GM10248 (cell line): ENCODE measurements at regions of chr14 and their contacts with region 1.

Region 1: DNA sequence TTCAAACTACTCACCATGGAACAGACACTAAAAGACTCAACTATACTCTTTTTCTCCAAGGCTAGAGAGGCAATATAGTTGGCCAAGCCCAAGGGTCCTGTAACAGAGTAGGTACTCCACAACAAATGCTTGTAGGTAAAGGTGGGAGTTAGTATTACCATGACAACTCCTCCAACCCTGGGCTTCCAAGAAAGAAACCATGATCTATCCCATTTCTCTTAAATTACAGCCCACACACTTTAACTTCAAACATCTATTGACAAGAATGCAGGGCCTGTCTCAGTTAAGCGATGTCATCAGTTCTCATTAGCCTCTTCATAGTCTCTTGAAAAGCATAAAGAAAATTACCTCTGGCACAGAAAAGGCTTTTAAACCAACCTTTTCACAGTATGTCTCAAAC is 25.0 kb downstream of the ERH start:
- DNase-seq: no peak
- CTCF ChIP-seq: no peak

Region 2: GRCh38 chr14:69354383-69355153 is 18.5 kb before region 1 on chr14:
- CTCF ChIA-PET with region 1: interaction called, 27 read pairs
- POLR2A ChIA-PET with region 1: no interaction called
- DNase-seq: peak; percentile 91
- CTCF ChIP-seq: no peak

Region 3: DNA sequence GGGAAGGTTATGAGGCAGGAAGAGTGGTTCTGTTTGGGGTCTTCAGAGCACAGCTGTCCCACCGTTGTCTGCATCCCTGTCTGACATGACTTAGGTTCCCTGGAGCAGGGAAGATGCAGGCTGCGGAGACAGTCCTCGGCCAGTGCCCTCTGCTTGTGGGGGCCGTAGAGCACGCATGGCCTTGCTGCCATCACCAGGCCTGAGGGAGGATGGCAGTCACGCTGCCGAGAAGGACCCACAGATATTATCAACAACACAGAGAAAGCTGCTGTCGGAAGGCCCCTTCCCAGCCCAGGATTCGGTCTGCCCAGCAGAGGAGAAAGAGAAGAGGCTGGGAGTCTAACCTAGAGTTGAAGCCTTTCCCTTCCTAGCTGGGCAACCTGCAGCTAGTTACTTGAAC is 10.0 kb before region 1 on chr14:
- CTCF ChIA-PET with region 1: interaction called, 27 read pairs
- POLR2A ChIA-PET with region 1: interaction called, 6 read pairs
- DNase-seq: no peak
- CTCF ChIP-seq: no peak

Region 4: GRCh38 chr14:69387311-69387710 is 14.2 kb after region 1 on chr14:
- CTCF ChIA-PET with region 1: interaction called, 18 read pairs
- POLR2A ChIA-PET with region 1: interaction called, 6 read pairs
- DNase-seq: no peak
- CTCF ChIP-seq: no peak

Region 5: DNA sequence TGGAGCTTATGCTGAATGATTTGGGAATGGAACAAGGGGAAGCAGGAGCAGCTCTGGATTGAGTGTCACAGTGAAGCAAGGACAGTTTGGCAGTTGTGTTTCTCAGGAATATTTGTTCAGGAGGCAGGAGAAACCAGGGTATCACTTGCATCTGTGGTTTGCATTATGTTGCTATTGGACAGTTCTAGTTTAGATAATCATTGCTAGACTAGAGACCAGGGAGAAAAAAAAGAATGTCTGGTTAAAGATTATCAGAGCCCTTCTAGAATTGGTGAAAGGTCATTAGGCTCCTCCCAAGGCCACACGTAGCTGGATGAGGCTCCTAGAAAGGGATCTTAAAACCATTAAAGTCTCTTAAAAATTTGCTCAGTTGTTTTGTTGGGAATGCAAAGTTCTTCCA is 376.9 kb after region 1 on chr14:
- CTCF ChIA-PET with region 1: no interaction called
- POLR2A ChIA-PET with region 1: no interaction called
- DNase-seq: no peak
- CTCF ChIP-seq: no peak